Dendritic cell treated with granulocyte-macrophage colony-stimulating factor and Interleukin-4, amounts not matched to agents 40 ng/mL and 50 ng/mL, for 4 days (primary cell): ENCODE measurements at regions of chr18 and their contacts with region 1.

Region 1: GRCh38 chr18:57737400-57738060 is 65.6 kb downstream of the ATP8B1 start:
- H3K4me3 Mint-ChIP-seq: peak overlapping the region; percentile 67
- H3K27ac Mint-ChIP-seq: peak overlapping the region; percentile 89
- H3K4me1 Mint-ChIP-seq: peaks cover 26% of the 10 kb centered on the region
- H3K27me3 Mint-ChIP-seq: no peaks in the 10 kb centered on the region

Region 2: GRCh38 chr18:57649556-57650500 is 87.7 kb before region 1 on chr18:
- intact Hi-C with region 1: loop called (anchors 1 kb)
- H3K4me3 Mint-ChIP-seq: no peak overlapping the region
- H3K27ac Mint-ChIP-seq: peak overlapping the region; percentile 81
- H3K4me1 Mint-ChIP-seq: peaks cover 24% of the 10 kb centered on the region
- H3K27me3 Mint-ChIP-seq: no peaks in the 10 kb centered on the region